PC-9 (cell line): ENCODE measurements at regions of chr18 and their contacts with region 1.

Region 1: DNA sequence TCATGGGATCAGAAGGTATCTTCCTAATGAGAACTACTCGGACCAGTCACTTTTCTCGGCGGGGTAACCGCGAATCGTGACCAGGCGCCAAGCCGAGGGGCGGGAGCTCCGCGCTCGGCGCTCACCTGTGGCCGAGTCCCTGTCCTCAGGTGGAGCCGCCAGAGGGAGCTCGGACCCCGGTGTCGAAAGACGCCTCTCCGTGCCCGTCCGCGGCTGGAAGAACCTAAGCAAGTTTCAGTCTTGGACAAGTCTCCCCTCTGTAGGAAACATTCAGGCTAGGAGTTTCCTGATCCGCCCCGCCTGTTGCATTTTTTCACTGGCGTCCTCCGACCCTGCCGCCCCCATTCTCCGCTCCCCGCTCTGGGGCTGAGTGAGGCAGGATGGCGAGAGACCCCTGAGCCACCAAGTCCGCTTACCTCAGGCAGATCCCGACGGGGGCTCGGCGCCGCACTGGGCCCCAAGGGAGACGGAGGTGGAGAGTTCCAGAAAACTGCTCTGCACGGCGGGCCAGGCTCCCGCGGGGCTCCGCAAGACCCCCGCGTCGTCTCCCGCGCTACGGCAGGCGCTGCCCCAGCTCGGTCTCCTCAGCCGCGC is 478 bp downstream of the DSEL start:
- DNase-seq: peak; percentile 73 to 84
- H3K4me3 ChIP-seq: peak overlapping the region; percentile 92
- H3K27ac ChIP-seq: peak overlapping the region; percentile 46
- H3K4me1 ChIP-seq: 0 out of 2 replicates have a peak, but pooled peaks cover 8% of the 10 kb centered on the region
- H3K27me3 ChIP-seq: no peaks in the 10 kb centered on the region
- CTCF ChIP-seq: peak; percentile 74

Region 2: GRCh38 chr18:67710639-67711038 is 194.6 kb after region 1 on chr18:
- CTCF ChIA-PET with region 1: no interaction called
- POLR2A ChIA-PET with region 1: no interaction called
- intact Hi-C with region 1: loop called (anchors 10 kb)
- DNase-seq: no peak
- H3K4me3 ChIP-seq: no peak overlapping the region
- H3K27ac ChIP-seq: no peak overlapping the region
- H3K4me1 ChIP-seq: no peaks in the 10 kb centered on the region
- H3K27me3 ChIP-seq: no peaks in the 10 kb centered on the region
- CTCF ChIP-seq: peak; percentile 52; the same call in 1 of the 2 replicates

Region 3: DNA sequence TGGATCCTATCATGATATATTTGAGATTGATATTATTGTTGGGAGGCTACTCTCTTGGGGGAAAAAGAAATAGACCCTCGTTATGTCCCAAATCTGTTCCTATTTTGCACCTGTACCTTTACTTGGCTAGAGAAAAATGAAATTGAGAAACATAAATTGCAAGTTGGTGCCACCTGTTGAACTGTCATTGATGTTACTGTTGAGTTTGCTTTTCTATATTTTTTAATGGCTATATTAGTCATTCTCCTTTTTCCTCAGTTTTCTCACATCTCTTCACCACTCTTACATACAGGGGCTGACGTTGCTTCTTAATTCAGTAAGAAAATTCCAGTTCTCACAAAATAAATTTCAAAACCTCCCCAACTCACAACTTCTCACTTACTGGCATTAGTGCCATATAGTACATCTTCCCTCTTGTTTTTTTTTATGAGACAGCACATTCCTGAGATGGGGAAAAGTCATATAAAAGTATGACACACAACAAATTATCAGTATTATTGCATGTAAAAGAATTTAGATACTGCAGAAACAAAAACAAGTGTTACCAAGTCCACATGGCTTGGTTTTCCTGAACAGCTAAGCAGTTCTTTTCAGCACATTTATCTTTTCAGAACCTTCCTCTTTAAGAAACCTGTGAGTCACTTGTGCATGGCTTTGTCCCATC is 348.8 kb after region 1 on chr18:
- CTCF ChIA-PET with region 1: no interaction called
- POLR2A ChIA-PET with region 1: no interaction called
- intact Hi-C with region 1: loop called (anchors 5 kb)
- DNase-seq: no peak
- H3K4me3 ChIP-seq: no peak overlapping the region
- H3K27ac ChIP-seq: no peak overlapping the region
- H3K4me1 ChIP-seq: no peaks in the 10 kb centered on the region
- H3K27me3 ChIP-seq: no peaks in the 10 kb centered on the region
- CTCF ChIP-seq: no peak

Region 4: DNA sequence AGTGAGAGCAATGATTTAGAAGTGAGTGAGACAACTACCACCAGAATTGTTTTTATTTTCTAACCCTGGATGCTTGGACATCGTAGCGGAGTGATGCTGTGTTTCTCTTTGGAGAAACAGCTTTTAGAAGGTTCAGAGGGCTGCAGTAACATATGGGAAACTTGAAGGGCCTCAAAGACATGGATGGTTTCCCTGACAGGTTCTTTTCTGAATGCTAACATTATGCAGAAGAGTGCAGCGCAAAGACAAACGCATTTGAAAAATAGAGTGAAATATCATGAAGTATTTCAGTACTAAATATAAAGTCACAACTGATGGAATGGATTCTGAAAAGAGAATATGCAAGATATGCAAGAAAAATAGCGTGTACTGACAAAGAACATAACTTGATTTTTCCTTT is 385.5 kb after region 1 on chr18:
- CTCF ChIA-PET with region 1: no interaction called
- POLR2A ChIA-PET with region 1: no interaction called
- intact Hi-C with region 1: no loop called
- DNase-seq: no peak
- H3K4me3 ChIP-seq: no peak overlapping the region
- H3K27ac ChIP-seq: no peak overlapping the region
- H3K4me1 ChIP-seq: no peaks in the 10 kb centered on the region
- H3K27me3 ChIP-seq: no peaks in the 10 kb centered on the region
- CTCF ChIP-seq: no peak

Region 5: GRCh38 chr18:68177807-68178702 is 662.0 kb after region 1 on chr18:
- CTCF ChIA-PET with region 1: no interaction called
- POLR2A ChIA-PET with region 1: no interaction called
- intact Hi-C with region 1: loop called (anchors 10 kb)
- DNase-seq: peak; percentile 45 to 64
- H3K4me3 ChIP-seq: no peak overlapping the region
- H3K27ac ChIP-seq: no peak overlapping the region
- H3K4me1 ChIP-seq: no peaks in the 10 kb centered on the region
- H3K27me3 ChIP-seq: no peaks in the 10 kb centered on the region
- CTCF ChIP-seq: no peak

Region 6: DNA sequence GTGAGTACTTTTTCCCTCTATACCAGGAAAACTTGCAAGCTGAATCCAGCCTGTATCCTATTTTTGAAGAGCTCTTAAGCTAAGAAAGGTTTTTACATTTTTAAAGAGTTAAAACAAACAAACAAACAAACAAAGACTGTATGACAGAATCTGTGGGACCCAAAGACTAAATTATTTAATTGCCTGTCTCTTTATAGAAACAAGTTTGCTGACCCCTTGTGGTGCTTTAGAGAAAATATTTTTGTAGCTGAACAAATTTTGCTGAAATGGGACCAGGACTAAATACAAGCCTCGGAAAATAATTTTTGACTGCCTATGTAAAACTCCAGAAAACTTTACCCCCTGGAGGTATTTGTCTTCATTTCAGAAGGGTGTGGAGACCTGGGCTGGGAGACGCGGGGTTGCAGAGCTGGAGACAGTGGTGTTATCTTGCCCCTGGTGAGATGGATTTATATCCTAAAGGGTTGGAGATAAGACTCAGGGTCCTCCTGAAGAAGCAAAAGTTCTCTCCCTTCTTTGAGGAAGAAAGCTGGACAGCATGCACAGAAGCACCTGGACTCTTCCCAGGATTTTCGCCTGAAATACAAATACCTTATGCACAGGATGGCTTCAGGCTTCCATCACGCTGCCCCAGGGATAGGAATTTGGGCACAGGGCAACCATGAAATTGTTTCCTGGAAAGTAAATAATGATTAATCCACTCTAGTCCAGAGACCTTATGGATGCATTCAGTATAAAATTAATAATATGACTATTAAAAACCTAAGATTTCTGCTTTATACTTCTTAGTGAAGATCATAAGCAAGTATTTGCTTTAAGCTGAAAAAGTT is 1144.5 kb after region 1 on chr18:
- CTCF ChIA-PET with region 1: interaction called, 4 read pairs
- POLR2A ChIA-PET with region 1: no interaction called
- intact Hi-C with region 1: loop called (anchors 1 kb)
- DNase-seq: no peak
- H3K4me3 ChIP-seq: no peak overlapping the region
- H3K27ac ChIP-seq: no peak overlapping the region
- H3K4me1 ChIP-seq: no peaks in the 10 kb centered on the region
- H3K27me3 ChIP-seq: no peaks in the 10 kb centered on the region
- CTCF ChIP-seq: peak; percentile 78